Activated CD4-positive, alpha-beta T cell treated with anti-CD3 and anti-CD28 coated beads for 36 hours (primary cell): ENCODE measurements at regions of chr1 and their contacts with region 1.

Region 1: DNA sequence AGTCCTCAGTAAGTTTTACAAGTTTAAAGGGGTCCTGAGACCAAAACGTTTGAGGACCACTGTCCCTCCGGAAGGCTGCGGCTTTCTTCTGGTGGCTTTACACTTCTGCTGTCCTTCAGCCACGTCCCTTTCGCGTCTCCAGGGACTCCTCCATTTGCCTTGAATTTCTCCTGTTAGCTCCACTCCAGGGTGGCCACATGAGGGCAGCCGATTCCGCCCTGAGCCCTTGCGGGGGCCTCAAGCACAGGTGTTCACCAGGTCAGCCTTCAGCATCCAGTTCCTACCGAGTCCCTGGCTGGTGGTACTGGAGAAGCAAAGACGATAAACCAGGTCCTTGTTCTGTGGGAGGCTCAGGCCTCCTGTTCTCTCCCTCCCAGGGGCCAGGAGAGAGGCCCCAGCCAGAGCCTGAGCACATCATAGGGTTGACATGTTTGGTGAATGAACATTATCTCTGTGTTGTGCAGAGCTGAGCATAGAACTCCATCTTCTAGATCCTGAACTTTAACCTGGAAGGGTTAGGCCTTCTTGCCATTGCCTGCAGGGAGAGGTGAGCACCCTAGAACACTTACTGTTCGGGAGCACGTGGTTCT is 27.4 kb upstream of the COQ8A start:
- DNase-seq: peak; percentile 74
- ATAC-seq: peak; percentile 81
- H3K4me3 Mint-ChIP-seq: no peak overlapping the region
- H3K27ac Mint-ChIP-seq: no peak overlapping the region
- H3K4me1 Mint-ChIP-seq: no peaks in the 10 kb centered on the region
- H3K27me3 Mint-ChIP-seq: no peaks in the 10 kb centered on the region

Region 2: DNA sequence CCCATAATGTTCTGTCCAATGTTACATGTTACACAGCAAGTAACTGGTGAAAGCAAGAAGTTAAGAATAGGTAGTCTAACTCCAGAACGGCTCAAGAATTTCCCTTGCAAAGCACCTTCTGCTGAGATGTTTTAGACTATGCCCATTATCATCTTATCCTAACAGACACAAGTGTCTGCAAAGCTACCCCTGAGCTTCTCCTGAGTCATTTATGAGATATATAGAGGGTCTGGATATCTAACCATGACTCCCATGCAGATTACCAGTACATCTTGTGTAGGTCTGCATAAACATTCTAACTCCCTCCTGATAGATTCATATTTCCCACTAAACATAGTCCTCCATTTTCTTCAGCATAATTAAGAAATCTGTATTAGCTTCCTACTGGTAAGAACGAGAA is 199.1 kb after region 1 on chr1:
- CTCF ChIA-PET with region 1: no interaction called
- POLR2A ChIA-PET with region 1: no interaction called
- intact Hi-C with region 1: loop called in 1 of 2 experiments (anchors 10 kb)
- DNase-seq: no peak
- ATAC-seq: no peak
- H3K4me3 Mint-ChIP-seq: no peak overlapping the region
- H3K27ac Mint-ChIP-seq: no peak overlapping the region
- H3K4me1 Mint-ChIP-seq: no peaks in the 10 kb centered on the region
- H3K27me3 Mint-ChIP-seq: peaks cover 5% of the 10 kb centered on the region

Region 3: GRCh38 chr1:227234998-227235405 is 322.3 kb after region 1 on chr1:
- CTCF ChIA-PET with region 1: no interaction called
- POLR2A ChIA-PET with region 1: no interaction called
- intact Hi-C with region 1: loop called in 1 of 2 experiments (anchors 5 kb)
- DNase-seq: peak; percentile 22
- ATAC-seq: peak; percentile 57
- H3K4me3 Mint-ChIP-seq: no peak overlapping the region
- H3K27ac Mint-ChIP-seq: no peak overlapping the region
- H3K4me1 Mint-ChIP-seq: no peaks in the 10 kb centered on the region
- H3K27me3 Mint-ChIP-seq: peaks cover 12% of the 10 kb centered on the region

Region 4: GRCh38 chr1:227268943-227269342 is 356.3 kb after region 1 on chr1:
- CTCF ChIA-PET with region 1: no interaction called
- POLR2A ChIA-PET with region 1: no interaction called
- intact Hi-C with region 1: no loop called
- DNase-seq: no peak
- ATAC-seq: no peak
- H3K4me3 Mint-ChIP-seq: no peak overlapping the region
- H3K27ac Mint-ChIP-seq: no peak overlapping the region
- H3K4me1 Mint-ChIP-seq: no peaks in the 10 kb centered on the region
- H3K27me3 Mint-ChIP-seq: peaks cover 14% of the 10 kb centered on the region

Region 5: GRCh38 chr1:227437495-227438008 is 524.9 kb after region 1 on chr1:
- CTCF ChIA-PET with region 1: interaction called, 5 read pairs
- POLR2A ChIA-PET with region 1: no interaction called
- intact Hi-C with region 1: loop called in 1 of 2 experiments (anchors 2 kb)
- DNase-seq: no peak
- ATAC-seq: no peak
- H3K4me3 Mint-ChIP-seq: no peak overlapping the region
- H3K27ac Mint-ChIP-seq: no peak overlapping the region
- H3K4me1 Mint-ChIP-seq: no peaks in the 10 kb centered on the region
- H3K27me3 Mint-ChIP-seq: peaks cover 24% of the 10 kb centered on the region